A673 (cell line): ENCODE measurements at regions of chr9 and their contacts with region 1.

Region 1: DNA sequence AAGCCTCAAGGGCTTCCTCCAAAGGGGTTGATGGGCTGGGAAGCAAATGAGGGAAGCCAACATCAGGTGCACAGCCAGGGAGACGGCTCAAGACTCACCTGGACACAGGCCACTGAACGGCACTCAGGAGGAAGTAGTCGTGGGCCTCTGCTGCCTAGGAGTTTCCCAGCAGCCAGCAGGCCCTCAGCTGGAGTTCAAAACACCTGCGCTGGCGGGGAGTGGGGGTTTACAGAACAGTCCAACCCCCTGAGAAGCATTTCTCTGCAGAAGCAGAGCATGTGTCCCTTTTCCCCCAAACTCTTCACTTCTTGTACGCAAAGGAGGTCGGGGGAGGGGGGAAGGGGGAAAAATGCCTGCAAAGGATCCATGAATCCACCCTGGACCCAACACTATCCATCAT is 2.3 kb downstream of the WHRN start:
- DNase-seq: peak; percentile 6
- H3K4me3 ChIP-seq: peak overlapping the region; percentile 77
- H3K27ac ChIP-seq: peak overlapping the region; percentile 43
- H3K4me1 ChIP-seq: peaks cover 27% of the 10 kb centered on the region
- H3K27me3 ChIP-seq: peaks cover 14% of the 10 kb centered on the region
- CTCF ChIP-seq: no peak

Region 2: DNA sequence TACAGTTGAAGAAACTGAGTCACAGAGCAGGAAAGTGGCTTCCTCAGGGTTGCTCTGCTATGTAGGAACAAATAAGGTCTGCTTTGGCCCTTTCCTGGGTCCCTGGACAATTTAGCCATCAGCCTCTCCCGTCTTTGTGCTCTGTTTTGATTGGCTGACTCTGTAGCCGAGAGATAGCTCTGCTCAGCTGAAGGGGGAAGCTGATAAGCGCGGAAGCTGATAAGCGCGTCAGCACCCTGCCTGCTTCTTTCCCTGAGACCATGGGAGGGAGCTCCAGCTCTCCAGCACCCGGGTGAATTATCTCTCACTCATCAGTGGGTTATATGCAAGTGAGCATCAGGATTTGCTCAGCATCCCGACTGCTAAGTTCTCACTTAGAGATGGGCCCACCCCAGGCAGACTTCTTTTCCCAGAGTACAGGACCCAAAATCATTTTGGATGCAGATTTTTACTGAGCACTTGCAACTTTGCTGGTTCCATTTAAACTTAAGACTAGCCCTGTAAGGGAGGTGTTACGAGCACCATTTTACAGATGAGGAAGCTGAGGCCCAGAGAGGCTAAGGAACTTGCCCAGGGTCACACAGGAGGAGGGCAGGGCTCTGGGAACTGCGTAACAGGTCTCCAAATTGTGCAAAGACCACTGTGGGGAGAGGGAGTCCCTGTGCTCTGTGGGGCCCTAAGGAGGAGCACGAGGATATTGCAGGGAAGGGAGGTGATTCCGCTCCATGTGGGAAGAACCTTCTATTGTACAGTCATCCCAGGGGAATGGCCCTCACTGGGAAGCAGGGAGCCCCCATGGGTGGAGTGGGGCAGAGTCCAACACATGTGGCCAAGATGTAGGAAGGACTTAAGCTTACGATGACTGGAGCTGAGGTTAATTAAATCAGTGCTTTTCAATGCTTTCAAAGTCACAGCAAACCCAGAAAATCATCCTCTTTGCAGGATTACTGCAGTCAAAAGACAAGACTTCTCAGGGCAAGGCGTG is 263.8 kb before region 1 on chr9:
- CTCF ChIA-PET with region 1: no interaction called
- POLR2A ChIA-PET with region 1: no interaction called
- intact Hi-C with region 1: no loop called
- DNase-seq: peak; percentile 31
- H3K4me3 ChIP-seq: no peak overlapping the region
- H3K27ac ChIP-seq: no peak overlapping the region
- H3K4me1 ChIP-seq: no peaks in the 10 kb centered on the region
- H3K27me3 ChIP-seq: no peaks in the 10 kb centered on the region
- CTCF ChIP-seq: peak; percentile 45

Region 3: DNA sequence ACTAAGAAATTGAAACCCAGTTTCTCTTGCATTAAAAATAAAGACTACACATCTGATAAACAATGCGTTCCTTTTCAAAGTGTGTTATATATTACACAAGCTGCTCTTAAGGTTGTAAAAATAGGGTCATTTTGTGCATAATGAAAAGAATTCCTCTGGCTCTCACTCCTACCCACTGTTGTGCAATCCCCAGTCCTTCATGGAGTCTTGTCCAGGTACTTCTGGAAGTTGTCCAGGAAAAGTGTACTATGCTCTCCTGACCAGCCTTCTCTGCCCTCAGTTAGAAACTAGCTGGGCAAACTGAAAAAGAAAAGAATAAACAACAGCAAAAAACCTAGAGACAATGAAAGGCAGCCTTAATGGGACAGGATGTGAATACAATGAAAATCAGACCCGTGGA is 1305.1 kb after region 1 on chr9:
- CTCF ChIA-PET with region 1: no interaction called
- POLR2A ChIA-PET with region 1: interaction called, 12 read pairs
- intact Hi-C with region 1: no loop called
- DNase-seq: no peak
- H3K4me3 ChIP-seq: no peak overlapping the region
- H3K27ac ChIP-seq: no peak overlapping the region
- H3K4me1 ChIP-seq: no peaks in the 10 kb centered on the region
- H3K27me3 ChIP-seq: no peaks in the 10 kb centered on the region
- CTCF ChIP-seq: no peak

Region 4: DNA sequence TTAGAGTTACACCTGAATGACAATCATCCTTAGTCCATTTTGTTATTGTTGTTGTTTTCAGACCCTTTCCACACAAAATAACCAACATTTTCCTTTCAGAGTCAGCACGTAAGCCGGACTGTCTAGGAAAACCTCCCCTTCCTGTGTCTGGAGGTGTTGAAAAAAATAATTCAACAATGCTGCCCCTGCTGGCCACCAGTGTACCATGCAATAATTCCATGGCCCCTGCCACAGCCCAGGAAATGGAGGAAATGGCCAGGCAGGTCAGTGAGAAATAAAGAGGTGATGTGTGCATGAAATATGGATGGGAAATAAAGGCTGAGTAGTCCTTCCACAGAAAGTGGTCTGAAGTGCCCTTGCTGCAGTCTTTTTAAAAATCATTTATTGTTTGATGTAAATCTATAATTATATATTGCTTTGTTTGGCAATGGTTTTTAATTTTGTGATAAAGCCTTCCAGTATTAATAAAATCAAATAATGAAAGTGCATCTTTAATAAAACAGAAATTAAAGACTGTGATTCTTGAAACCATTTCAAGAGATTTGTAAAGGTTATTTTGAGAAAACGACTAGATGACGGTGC is 1497.8 kb after region 1 on chr9:
- CTCF ChIA-PET with region 1: no interaction called
- POLR2A ChIA-PET with region 1: no interaction called
- intact Hi-C with region 1: no loop called
- DNase-seq: peak; percentile 35
- H3K4me3 ChIP-seq: no peak overlapping the region
- H3K27ac ChIP-seq: no peak overlapping the region
- H3K4me1 ChIP-seq: peaks cover 8% of the 10 kb centered on the region
- H3K27me3 ChIP-seq: no peaks in the 10 kb centered on the region
- CTCF ChIP-seq: peak; percentile 66